Heart right ventricle (tissue), 16 donors: ENCODE measurements at regions of chr10 and their contacts with region 1.

Region 1: GRCh38 chr10:128124813-128125403 is 1.3 kb downstream of the MKI67 start:
- DNase-seq: no peak
- ATAC-seq: no peak
- H3K4me3 ChIP-seq: peak overlapping the region in 3 of 10 donors; percentile 61 to 83 (median 78)
- H3K27ac ChIP-seq: no peak overlapping the region
- H3K4me1 ChIP-seq: peaks cover 6 to 31% (median 17%) of the 10 kb centered on the region in 9 donors
- H3K27me3 ChIP-seq: peaks cover 0 to 59% (median 40%) of the 10 kb centered on the region in 7 donors
- CTCF ChIP-seq: no peak

Region 2: GRCh38 chr10:127079392-127079791 is 1045.5 kb before region 1 on chr10:
- intact Hi-C with region 1: loop called in 1 of 10 experiments (anchors 5 kb)
- DNase-seq: no peak
- ATAC-seq: no peak
- H3K4me3 ChIP-seq: no peak overlapping the region
- H3K27ac ChIP-seq: no peak overlapping the region
- H3K4me1 ChIP-seq: peaks cover 0 to 12% (median 0%) of the 10 kb centered on the region in 9 donors
- H3K27me3 ChIP-seq: no peaks in the 10 kb centered on the region
- CTCF ChIP-seq: no peak

Region 3: DNA sequence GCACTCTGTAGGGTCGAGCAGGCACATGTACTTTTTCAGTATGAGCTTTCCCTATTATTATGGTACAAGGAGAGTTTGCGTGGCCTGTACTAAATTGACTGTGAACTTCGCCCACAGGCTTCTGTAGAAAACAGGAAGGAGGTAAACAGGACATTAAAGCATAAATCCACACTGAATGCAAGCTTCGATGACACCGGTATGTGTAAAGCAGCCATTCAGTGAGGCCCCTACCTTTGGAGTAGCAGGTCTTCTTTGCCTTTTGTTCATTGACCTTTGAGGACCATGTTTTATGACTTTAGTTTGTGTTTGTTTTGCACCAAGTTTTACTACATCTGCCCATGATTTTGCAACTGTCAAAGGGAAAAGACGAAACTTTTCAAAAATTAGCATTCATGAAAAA is 13.2 kb before region 1 on chr10:
- intact Hi-C with region 1: loop called in 1 of 10 experiments (anchors 1 kb)
- DNase-seq: no peak
- ATAC-seq: no peak
- H3K4me3 ChIP-seq: no peak overlapping the region
- H3K27ac ChIP-seq: no peak overlapping the region
- H3K4me1 ChIP-seq: no peaks in the 10 kb centered on the region
- H3K27me3 ChIP-seq: peaks cover 0 to 5% (median 0%) of the 10 kb centered on the region in 7 donors
- CTCF ChIP-seq: no peak

Region 4: DNA sequence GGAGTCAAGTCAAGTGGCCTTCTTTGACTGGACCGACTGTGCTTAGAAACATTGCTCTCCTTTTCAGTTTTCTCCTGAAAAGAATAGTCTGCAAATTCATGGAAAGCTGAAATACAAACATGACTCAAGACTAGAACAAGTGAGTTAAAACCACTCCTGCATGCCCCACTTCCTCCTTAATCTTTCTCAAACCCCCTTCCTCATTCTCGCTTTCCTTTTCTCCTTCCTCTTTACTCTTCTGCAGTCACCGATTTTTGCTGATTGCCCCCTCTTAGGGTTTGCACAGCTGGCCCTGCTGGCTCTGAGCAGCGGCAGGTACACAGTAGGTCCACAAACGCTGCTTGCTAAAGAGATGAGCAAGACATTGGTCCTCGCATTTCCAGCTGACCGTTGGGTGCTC is 36.1 kb after region 1 on chr10:
- intact Hi-C with region 1: no loop called
- DNase-seq: no peak
- ATAC-seq: no peak
- H3K4me3 ChIP-seq: no peak overlapping the region
- H3K27ac ChIP-seq: no peak overlapping the region
- H3K4me1 ChIP-seq: peaks cover 0 to 11% (median 0%) of the 10 kb centered on the region in 9 donors
- H3K27me3 ChIP-seq: peaks cover 0 to 39% (median 24%) of the 10 kb centered on the region in 7 donors
- CTCF ChIP-seq: no peak

Region 5: GRCh38 chr10:128254476-128254875 is 129.6 kb after region 1 on chr10:
- intact Hi-C with region 1: no loop called
- DNase-seq: no peak
- ATAC-seq: no peak
- H3K4me3 ChIP-seq: no peak overlapping the region
- H3K27ac ChIP-seq: no peak overlapping the region
- H3K4me1 ChIP-seq: no peaks in the 10 kb centered on the region
- H3K27me3 ChIP-seq: peaks cover 0 to 64% (median 30%) of the 10 kb centered on the region in 7 donors
- CTCF ChIP-seq: no peak